ENCODE measurements at regions of chr3 and their contacts with region 1.

Region 1: GRCh38 chr3:132456571-132456970 is 39.3 kb downstream of the DNAJC13 start:
- DNase-seq: no peak
- ATAC-seq: no peak
- H3K4me3 ChIP-seq: no peak overlapping the region
- H3K27ac ChIP-seq: no peak overlapping the region
- H3K4me1 ChIP-seq: peaks cover 0 to 8% (median 0%) of the 10 kb centered on the region in 12 donors
- H3K27me3 ChIP-seq: no peaks in the 10 kb centered on the region
- CTCF ChIP-seq: no peak
- POLR2A ChIP-seq: no peak

Region 2: DNA sequence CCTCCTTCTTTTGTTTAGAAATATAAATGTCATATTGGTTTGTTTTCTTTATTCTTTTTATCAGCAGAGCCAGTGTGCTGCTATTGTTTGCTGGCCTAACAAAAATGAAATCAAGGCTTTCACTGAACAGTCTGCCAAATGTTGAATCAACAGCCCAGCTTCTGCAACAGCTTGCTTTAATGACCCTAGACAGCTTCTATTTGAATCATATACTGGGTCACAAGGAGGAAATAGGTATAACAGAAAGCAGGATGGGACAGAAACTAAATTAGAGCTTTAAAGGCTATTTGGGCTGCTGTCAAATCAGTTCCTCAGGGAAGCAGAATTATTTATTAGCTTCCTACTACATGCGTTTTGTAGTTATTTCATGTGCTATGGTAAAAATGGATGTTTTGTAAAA is 51.4 kb before region 1 on chr3:
- intact Hi-C with region 1: loop called in 1 of 10 experiments (anchors 2 kb)
- DNase-seq: no peak
- ATAC-seq: peak in 3 of 4 donors; percentile 38 to 49 (median 47)
- H3K4me3 ChIP-seq: no peak overlapping the region
- H3K27ac ChIP-seq: peak overlapping the region in 1 of 12 donors; percentile 13
- H3K4me1 ChIP-seq: peaks cover 0 to 20% (median 6%) of the 10 kb centered on the region in 12 donors
- H3K27me3 ChIP-seq: no peaks in the 10 kb centered on the region
- CTCF ChIP-seq: no peak
- POLR2A ChIP-seq: no peak